ENCODE measurements at regions of chr12 and their contacts with region 1.

Region 1: GRCh38 chr12:62435303-62436163 is 31.1 kb upstream of the MON2 start:
- DNase-seq: peak in 1 of 2 experiments; percentile 21
- H3K4me3 ChIP-seq: peak overlapping the region; percentile 38; the same call in 1 of the 2 replicates
- H3K27ac ChIP-seq: no peak overlapping the region
- H3K4me1 ChIP-seq: no peaks in the 10 kb centered on the region
- H3K27me3 ChIP-seq: no peaks in the 10 kb centered on the region
- CTCF ChIP-seq: no peak

Region 2: DNA sequence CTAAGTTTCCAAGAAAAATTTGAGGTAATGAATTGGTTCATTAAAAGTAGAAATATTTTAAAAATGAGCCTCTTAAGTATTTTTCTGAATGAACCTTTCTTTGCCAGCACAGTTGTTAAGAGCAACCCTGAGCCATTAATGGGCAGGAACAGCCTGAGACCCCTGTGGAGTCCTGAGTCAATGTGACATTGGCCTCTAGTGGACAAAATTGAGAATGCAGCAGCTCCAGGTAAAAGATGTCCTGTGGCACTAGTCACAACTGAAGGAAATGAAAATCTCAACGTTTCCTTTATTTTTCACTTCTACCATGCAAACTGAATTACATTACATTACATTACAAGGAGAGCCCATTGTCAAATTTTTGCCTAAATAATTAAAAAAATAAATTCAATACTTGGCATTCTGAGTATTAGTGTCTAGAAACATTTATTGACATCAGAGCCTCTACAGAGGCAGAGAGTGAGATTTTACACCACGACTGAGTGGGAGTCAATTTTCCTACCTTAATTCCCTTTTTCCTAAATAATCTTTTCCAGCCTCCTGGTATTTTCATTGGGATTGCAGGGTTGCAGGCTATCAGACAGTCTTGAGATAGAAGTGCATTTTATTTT is 363.7 kb after region 1 on chr12:
- CTCF ChIA-PET with region 1: interaction called, 4 read pairs
- POLR2A ChIA-PET with region 1: no interaction called
- intact Hi-C with region 1: loop called (anchors 1 kb)
- DNase-seq: peak; percentile 52 to 54
- H3K4me3 ChIP-seq: no peak overlapping the region
- H3K27ac ChIP-seq: no peak overlapping the region
- H3K4me1 ChIP-seq: peaks cover 13% of the 10 kb centered on the region
- H3K27me3 ChIP-seq: no peaks in the 10 kb centered on the region
- CTCF ChIP-seq: peak; percentile 97

Region 3: GRCh38 chr12:62813031-62813829 is 377.7 kb after region 1 on chr12:
- CTCF ChIA-PET with region 1: interaction called, 3 read pairs
- POLR2A ChIA-PET with region 1: no interaction called
- intact Hi-C with region 1: loop called (anchors 5 kb)
- DNase-seq: peak in 1 of 2 experiments; percentile 27
- H3K4me3 ChIP-seq: no peak overlapping the region
- H3K27ac ChIP-seq: no peak overlapping the region
- H3K4me1 ChIP-seq: no peaks in the 10 kb centered on the region
- H3K27me3 ChIP-seq: no peaks in the 10 kb centered on the region
- CTCF ChIP-seq: peak; percentile 64

Region 4: DNA sequence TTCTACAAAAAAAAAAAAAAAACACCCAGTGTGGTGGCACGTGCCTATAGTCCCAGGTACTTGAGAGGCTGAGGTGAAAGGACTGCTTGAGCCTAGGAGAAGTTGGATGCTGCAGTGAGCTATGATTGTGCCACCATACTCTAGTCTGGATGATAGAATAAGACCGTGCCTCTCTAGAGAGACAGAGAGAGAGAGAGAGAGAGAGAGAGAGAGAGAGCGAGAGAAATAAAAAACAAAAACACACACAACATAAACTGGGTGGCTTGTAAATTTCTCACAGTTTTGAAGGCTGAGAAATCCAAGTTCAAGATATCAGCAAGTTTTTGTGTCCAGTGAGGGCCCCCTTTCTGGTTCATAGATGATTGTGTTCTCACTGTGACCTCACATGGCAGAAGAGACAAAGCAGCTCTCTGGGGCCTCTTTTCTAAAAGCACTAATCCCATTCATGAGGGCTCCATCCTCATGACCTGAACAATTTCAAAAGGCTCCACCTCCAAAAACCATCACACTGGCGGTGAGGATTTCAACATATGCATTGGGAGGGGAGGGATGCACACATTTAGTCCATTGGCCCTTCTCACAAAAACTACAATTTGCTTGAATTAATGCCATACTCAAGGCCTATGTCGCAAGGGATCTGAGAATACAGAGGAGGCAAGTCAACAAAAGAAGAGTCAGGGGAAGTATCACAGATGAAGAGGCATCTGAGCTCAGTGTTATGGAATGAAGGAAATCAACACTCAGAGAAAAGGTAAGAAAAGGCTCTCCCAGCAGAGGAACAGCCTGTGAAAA is 404.5 kb after region 1 on chr12:
- CTCF ChIA-PET with region 1: interaction called, 12 read pairs
- POLR2A ChIA-PET with region 1: no interaction called
- intact Hi-C with region 1: no loop called
- DNase-seq: peak in 1 of 2 experiments; percentile 79
- H3K4me3 ChIP-seq: no peak overlapping the region
- H3K27ac ChIP-seq: peak overlapping the region; percentile 45
- H3K4me1 ChIP-seq: no peaks in the 10 kb centered on the region
- H3K27me3 ChIP-seq: no peaks in the 10 kb centered on the region
- CTCF ChIP-seq: no peak

Measured in PC-9 (cell line).